Caco-2 (cell line): ENCODE measurements at regions of chr1 and their contacts with region 1.

Region 1: DNA sequence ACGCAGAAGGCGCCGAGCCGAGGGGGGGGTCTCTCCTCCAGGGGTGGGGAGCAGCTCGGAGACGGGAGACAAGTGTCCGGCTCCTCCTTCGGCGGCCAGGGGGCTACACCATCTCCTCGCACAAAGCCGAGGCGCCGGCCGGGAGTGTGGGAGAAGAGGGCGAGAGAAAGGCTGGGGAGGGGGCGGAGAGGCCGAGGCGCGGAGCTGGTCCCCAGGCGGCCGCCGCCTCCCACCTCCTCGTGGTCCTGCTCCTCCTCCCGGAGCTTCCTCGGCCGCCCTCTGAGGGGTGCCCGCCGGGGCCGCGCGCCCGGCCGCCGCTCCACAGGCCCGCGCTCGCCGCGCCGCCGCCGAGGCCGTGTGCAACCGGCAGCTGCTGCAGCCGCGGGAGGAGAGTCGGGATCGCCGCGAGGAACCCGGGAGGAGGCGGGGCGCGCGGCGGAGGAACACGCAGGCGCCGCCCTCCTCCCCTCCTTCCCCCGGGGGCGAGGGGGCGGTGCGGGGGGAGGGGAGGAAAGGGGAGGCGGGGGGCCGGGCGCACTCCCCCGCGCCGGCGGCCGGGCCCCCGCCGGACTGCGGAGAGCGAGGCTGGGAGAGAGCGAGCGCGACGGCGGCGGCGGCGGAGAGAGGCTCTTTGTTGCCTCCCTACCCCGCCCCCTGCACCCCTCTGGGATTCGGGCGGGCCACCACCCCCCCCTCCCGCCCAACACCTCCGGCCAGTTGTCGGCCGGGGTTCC is at the start of gene ENAH:
- DNase-seq: peak; percentile 81 to 86
- H3K4me3 ChIP-seq: peak within 1 kb of the TSS; percentile 94
- H3K4me3 Mint-ChIP-seq: peak within 1 kb of the TSS; percentile 99
- H3K27ac Mint-ChIP-seq: peak within 1 kb of the TSS; percentile 96
- H3K4me1 ChIP-seq: peaks cover 13% of the 10 kb centered on the region
- H3K4me1 Mint-ChIP-seq: peaks cover 24% of the 10 kb centered on the region
- H3K27me3 ChIP-seq: no peaks in the 10 kb centered on the region
- H3K27me3 Mint-ChIP-seq: no peaks in the 10 kb centered on the region
- CTCF ChIP-seq: no peak
- total RNA-seq, gene ENAH: 78.0 and 80.0 TPM in 2 replicates

Region 2: GRCh38 chr1:225474986-225475820 is 177.7 kb before region 1 on chr1:
- CTCF ChIA-PET with region 1: interaction called, 3 read pairs
- POLR2A ChIA-PET with region 1: interaction called, 3 read pairs
- intact Hi-C with region 1: loop called (anchors 2 kb)
- DNase-seq: peak in 1 of 2 experiments; percentile 81
- H3K4me3 ChIP-seq: no peak overlapping the region
- H3K4me3 Mint-ChIP-seq: no peak overlapping the region
- H3K27ac Mint-ChIP-seq: no peak overlapping the region
- H3K4me1 ChIP-seq: peaks cover 11% of the 10 kb centered on the region
- H3K4me1 Mint-ChIP-seq: no peaks in the 10 kb centered on the region
- H3K27me3 ChIP-seq: no peaks in the 10 kb centered on the region
- H3K27me3 Mint-ChIP-seq: no peaks in the 10 kb centered on the region
- CTCF ChIP-seq: peak; percentile 98 to 100

Region 3: DNA sequence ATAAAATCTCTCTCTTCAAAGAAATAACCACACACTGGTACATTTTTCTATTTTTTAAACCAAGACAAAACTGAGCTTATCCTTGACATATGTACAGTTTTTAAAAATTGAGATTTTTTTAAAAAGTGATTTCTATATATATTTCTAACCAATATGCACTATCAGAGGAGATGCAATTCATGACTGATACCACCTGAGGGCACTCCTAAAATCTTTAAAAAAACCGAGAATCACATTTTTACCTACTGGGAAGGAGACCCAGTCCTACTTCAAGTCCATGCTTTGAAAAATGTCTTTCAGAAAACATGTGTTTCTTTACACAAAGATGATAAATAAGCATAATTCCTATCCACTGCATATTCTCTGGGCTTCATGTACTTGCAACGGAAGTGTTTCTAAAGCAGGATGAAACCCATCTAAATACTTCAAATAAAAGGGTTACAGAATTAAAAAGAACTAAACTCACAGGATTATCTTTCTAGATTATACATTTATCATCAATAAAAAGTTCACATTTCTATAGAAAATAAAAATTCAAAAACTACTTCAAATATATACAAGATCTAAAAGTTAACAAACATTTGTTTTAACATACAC is 98.6 kb before region 1 on chr1:
- CTCF ChIA-PET with region 1: no interaction called
- POLR2A ChIA-PET with region 1: no interaction called
- intact Hi-C with region 1: loop called (anchors 10 kb)
- DNase-seq: peak in 1 of 2 experiments; percentile 31
- H3K4me3 ChIP-seq: no peak overlapping the region
- H3K4me3 Mint-ChIP-seq: no peak overlapping the region
- H3K27ac Mint-ChIP-seq: no peak overlapping the region
- H3K4me1 ChIP-seq: no peaks in the 10 kb centered on the region
- H3K4me1 Mint-ChIP-seq: no peaks in the 10 kb centered on the region
- H3K27me3 ChIP-seq: no peaks in the 10 kb centered on the region
- H3K27me3 Mint-ChIP-seq: no peaks in the 10 kb centered on the region
- CTCF ChIP-seq: peak; percentile 50 to 56

Region 4: GRCh38 chr1:225567590-225568194 is 85.2 kb before region 1 on chr1:
- CTCF ChIA-PET with region 1: no interaction called
- POLR2A ChIA-PET with region 1: no interaction called
- intact Hi-C with region 1: loop called (anchors 2 kb)
- DNase-seq: peak in 1 of 2 experiments; percentile 9
- H3K4me3 ChIP-seq: no peak overlapping the region
- H3K4me3 Mint-ChIP-seq: no peak overlapping the region
- H3K27ac Mint-ChIP-seq: no peak overlapping the region
- H3K4me1 ChIP-seq: no peaks in the 10 kb centered on the region
- H3K4me1 Mint-ChIP-seq: peaks cover 6% of the 10 kb centered on the region
- H3K27me3 ChIP-seq: no peaks in the 10 kb centered on the region
- H3K27me3 Mint-ChIP-seq: no peaks in the 10 kb centered on the region
- CTCF ChIP-seq: peak in 1 of 2 experiments; percentile 26

Region 5: DNA sequence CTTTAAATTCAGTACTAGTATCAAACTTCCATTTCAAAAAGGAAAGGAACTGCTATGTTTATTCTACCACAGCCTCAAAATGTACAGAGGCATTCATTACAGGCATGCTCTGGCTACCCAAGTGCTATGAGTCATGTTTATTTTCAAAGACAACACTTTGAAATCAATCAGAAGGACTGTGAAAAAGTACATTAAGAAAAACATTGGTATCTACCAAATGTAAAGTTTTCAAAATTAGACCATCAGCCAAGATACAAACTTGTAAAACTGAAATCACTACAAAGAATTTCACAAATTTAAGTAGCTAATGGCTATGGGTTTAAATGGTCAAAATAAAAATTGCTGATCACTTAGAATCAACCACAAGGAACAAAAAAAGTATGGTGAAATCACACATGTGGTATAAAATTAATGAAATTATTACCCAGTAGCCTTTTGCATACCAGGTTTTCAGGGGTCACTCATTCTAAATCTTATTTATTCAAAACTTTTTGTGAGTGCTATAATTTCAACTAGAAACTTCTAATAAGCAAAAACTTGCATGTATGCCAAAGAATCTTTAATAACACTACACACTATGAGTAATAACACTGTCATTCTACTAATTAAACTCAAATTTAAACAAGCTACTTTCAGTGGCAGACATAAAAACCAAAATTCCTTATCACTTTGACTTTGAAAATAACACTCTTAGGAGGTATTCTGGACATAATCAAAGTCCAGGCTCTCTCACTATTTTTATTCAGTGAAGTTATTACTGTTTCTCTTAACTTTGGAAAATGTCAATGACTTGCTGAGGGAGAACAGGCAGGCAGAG is 49.1 kb before region 1 on chr1:
- CTCF ChIA-PET with region 1: no interaction called
- POLR2A ChIA-PET with region 1: no interaction called
- intact Hi-C with region 1: loop called (anchors 5 kb)
- DNase-seq: no peak
- H3K4me3 ChIP-seq: no peak overlapping the region
- H3K4me3 Mint-ChIP-seq: no peak overlapping the region
- H3K27ac Mint-ChIP-seq: no peak overlapping the region
- H3K4me1 ChIP-seq: peaks cover 28% of the 10 kb centered on the region
- H3K4me1 Mint-ChIP-seq: peaks cover 30% of the 10 kb centered on the region
- H3K27me3 ChIP-seq: no peaks in the 10 kb centered on the region
- H3K27me3 Mint-ChIP-seq: no peaks in the 10 kb centered on the region
- CTCF ChIP-seq: no peak

Region 6: DNA sequence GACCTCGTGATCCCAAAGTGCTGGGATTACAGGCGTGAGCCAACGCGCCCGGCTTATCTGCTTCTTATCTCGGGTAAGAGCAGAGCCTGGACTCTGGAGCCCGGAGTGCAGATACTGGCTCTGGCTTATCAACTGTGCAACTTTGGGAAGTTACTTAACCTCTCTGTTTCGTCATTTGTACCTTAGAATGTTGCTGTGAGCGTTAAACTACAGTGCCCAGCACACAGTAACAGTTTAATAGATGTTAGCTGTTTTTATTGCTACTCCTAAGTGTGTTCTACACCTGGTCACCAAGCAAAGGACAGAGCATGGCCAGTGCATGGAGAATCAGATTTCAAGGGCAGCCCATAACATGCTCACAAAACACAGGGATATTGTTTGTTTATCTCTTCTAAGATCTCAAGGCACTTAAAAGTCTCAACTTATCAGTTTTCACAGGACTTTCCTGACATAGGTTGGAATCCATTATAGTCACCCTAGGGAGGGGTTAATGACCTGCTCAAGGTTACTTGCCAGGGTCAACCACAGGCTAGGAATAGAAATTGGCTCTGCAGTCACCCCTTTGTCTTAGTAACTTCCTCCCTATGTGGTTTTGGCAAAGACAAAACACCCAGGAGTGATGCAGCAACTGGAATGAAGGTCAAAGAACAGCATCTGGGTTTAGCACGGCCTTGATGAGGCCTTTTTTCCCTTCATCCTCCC is 102.2 kb after region 1 on chr1:
- CTCF ChIA-PET with region 1: no interaction called
- POLR2A ChIA-PET with region 1: no interaction called
- intact Hi-C with region 1: loop called (anchors 1 kb)
- DNase-seq: peak; percentile 84 to 94
- H3K4me3 ChIP-seq: no peak overlapping the region
- H3K4me3 Mint-ChIP-seq: no peak overlapping the region
- H3K27ac Mint-ChIP-seq: peak overlapping the region; percentile 75
- H3K4me1 ChIP-seq: peaks cover 39% of the 10 kb centered on the region
- H3K4me1 Mint-ChIP-seq: peaks cover 35% of the 10 kb centered on the region
- H3K27me3 ChIP-seq: no peaks in the 10 kb centered on the region
- H3K27me3 Mint-ChIP-seq: no peaks in the 10 kb centered on the region
- CTCF ChIP-seq: no peak